ENCODE measurements at regions of chr12 and their contacts with region 1.

Region 1: GRCh38 chr12:14691560-14691959 is 4.8 kb downstream of the GUCY2C start:
- DNase-seq: no peak
- H3K4me3 ChIP-seq: no peak overlapping the region
- H3K27ac ChIP-seq: no peak overlapping the region
- H3K4me1 ChIP-seq: no peaks in the 10 kb centered on the region; a peak in 1 of 7 replicates
- H3K27me3 ChIP-seq: peaks cover 0 to 3% (median 0%) of the 10 kb centered on the region in 4 experiments; a peak in 3 of 7 replicates
- CTCF ChIP-seq: no peak
- EP300 ChIP-seq: no peak
- POLR2A ChIP-seq: peak; percentile 46 to 91
- RAD21 ChIP-seq: no peak

Region 2: GRCh38 chr12:14365294-14366208 is 326.0 kb before region 1 on chr12 and contains the start of gene ATF7IP:
- CTCF ChIA-PET with region 1: no interaction called
- POLR2A ChIA-PET with region 1: no interaction called
- DNase-seq: peak; percentile 88 to 93
- H3K4me3 ChIP-seq: peak within 1 kb of the TSS; percentile 65 to 90 (median 73)
- H3K27ac ChIP-seq: peak within 1 kb of the TSS; percentile 91
- H3K4me1 ChIP-seq: peaks cover 0 to under 1% (median 0%) of the 10 kb centered on the region in 4 experiments; a peak in 1 of 7 replicates
- H3K27me3 ChIP-seq: no peaks in the 10 kb centered on the region
- CTCF ChIP-seq: peak in 1 of 3 experiments; percentile 17; a peak in 2 of 4 replicates
- EP300 ChIP-seq: peak in 1 of 2 experiments; percentile 66; a peak in 1 of 3 replicates
- POLR2A ChIP-seq: peak; percentile 93 to 98
- RAD21 ChIP-seq: peak; percentile 19 to 26; a peak in 2 of 4 replicates
- total RNA-seq, gene ATF7IP: 148 and 149 TPM in 2 replicates

Region 3: DNA sequence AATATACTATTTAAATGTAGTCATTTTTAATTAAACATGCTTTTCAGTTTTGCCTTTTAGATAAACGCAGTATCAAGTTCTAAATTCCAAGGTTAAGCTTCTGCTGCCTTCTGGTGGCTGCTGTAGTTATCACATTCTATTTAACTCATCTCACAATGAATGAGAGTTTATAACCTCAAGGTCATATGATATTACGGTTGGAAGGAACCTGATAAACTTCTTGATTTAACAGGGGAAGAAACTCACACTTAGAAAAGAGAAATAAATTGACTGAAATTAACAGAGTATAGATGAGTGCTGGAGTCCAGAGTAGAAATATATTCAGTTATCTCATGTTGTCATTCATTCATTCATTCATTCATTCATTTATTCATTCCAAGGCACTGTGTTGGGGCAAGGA is 27.1 kb before region 1 on chr12:
- CTCF ChIA-PET with region 1: interaction called, 3 read pairs
- POLR2A ChIA-PET with region 1: interaction called, 16 read pairs
- DNase-seq: no peak
- H3K4me3 ChIP-seq: no peak overlapping the region
- H3K27ac ChIP-seq: no peak overlapping the region
- H3K4me1 ChIP-seq: peaks cover 0 to 3% (median 1%) of the 10 kb centered on the region in 4 experiments; a peak in 3 of 7 replicates
- H3K27me3 ChIP-seq: no peaks in the 10 kb centered on the region
- CTCF ChIP-seq: peak in 2 of 3 experiments; percentile 49 to 52; a peak in 2 of 4 replicates
- EP300 ChIP-seq: no peak
- POLR2A ChIP-seq: no peak
- RAD21 ChIP-seq: peak; percentile 75 to 82

Region 4: GRCh38 chr12:14678547-14679150 is 12.9 kb before region 1 on chr12:
- CTCF ChIA-PET with region 1: interaction called, 5 read pairs
- POLR2A ChIA-PET with region 1: interaction called, 120 read pairs
- DNase-seq: no peak
- H3K4me3 ChIP-seq: no peak overlapping the region
- H3K27ac ChIP-seq: no peak overlapping the region
- H3K4me1 ChIP-seq: no peaks in the 10 kb centered on the region
- H3K27me3 ChIP-seq: peaks cover 0 to 9% (median 1%) of the 10 kb centered on the region in 4 experiments; a peak in 3 of 7 replicates
- CTCF ChIP-seq: no peak
- EP300 ChIP-seq: no peak
- POLR2A ChIP-seq: no peak
- RAD21 ChIP-seq: no peak

Region 5: DNA sequence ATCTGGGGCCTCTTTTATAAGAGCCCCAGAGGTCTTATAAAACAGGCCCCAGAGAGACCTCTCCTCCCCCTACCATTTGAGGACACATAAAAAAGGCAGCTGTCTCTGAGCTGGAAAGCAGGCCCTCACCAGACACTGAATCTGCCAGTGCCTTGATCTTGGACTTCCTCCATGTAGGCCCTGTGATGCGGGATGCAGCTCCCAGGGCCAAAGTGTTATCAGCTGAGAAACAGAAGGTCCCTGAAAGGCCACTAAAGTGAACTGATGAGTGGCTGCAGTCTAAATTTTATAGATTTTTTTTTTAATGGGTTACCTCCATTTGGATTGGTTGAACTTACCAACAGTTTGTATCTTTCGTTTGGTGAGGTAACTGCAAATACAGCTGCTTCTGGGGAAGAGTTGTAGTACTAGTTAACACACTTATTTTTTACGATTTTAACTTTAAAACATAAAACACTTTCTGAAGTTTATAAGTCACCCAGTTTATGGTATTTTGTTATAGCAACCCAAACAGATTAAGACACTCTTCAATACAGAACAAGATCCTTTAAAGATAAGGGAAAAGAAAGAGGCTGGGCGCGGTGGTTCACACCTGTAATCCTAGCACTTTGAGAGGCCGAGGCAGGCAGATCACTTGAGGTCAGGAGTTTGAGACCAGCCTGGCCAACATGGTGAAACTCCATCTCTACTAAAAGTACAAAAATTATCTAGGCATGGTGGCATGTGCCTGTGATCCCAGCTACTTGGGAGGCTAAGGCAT is 10.4 kb after region 1 on chr12:
- CTCF ChIA-PET with region 1: no interaction called
- POLR2A ChIA-PET with region 1: interaction called, 45 read pairs
- DNase-seq: no peak
- H3K4me3 ChIP-seq: no peak overlapping the region
- H3K27ac ChIP-seq: no peak overlapping the region
- H3K4me1 ChIP-seq: peaks cover 0 to 4% (median 3%) of the 10 kb centered on the region in 4 experiments; a peak in 3 of 7 replicates
- H3K27me3 ChIP-seq: no peaks in the 10 kb centered on the region
- CTCF ChIP-seq: no peak
- EP300 ChIP-seq: no peak
- POLR2A ChIP-seq: 0 out of 3 replicates have a peak, but pooled peaks of 1 of the 2 experiments have one; percentile 48
- RAD21 ChIP-seq: no peak

Region 6: GRCh38 chr12:14716848-14717444 is 25.4 kb after region 1 on chr12:
- CTCF ChIA-PET with region 1: interaction called, 3 read pairs
- POLR2A ChIA-PET with region 1: interaction called, 167 read pairs
- DNase-seq: no peak
- H3K4me3 ChIP-seq: no peak overlapping the region
- H3K27ac ChIP-seq: no peak overlapping the region
- H3K4me1 ChIP-seq: peaks cover 2 to 26% (median 11%) of the 10 kb centered on the region in 4 experiments
- H3K27me3 ChIP-seq: no peaks in the 10 kb centered on the region
- CTCF ChIP-seq: peak in 2 of 3 experiments; percentile 61 to 77; a peak in 3 of 4 replicates
- EP300 ChIP-seq: no peak
- POLR2A ChIP-seq: no peak
- RAD21 ChIP-seq: peak; percentile 39 to 58

Region 7: GRCh38 chr12:14828896-14829295 is 137.3 kb after region 1 on chr12:
- CTCF ChIA-PET with region 1: no interaction called
- POLR2A ChIA-PET with region 1: no interaction called
- DNase-seq: no peak
- H3K4me3 ChIP-seq: no peak overlapping the region
- H3K27ac ChIP-seq: no peak overlapping the region
- H3K4me1 ChIP-seq: no peaks in the 10 kb centered on the region
- H3K27me3 ChIP-seq: no peaks in the 10 kb centered on the region
- CTCF ChIP-seq: no peak
- EP300 ChIP-seq: no peak
- POLR2A ChIP-seq: no peak
- RAD21 ChIP-seq: no peak

Measured in H1 (cell line).